ENCODE measurements at regions of chr3 and their contacts with region 1.

Region 1: GRCh38 chr3:63961891-63962290 is 49.7 kb upstream of the SCAANT1 start:
- DNase-seq: peak in 1 of 2 donors; percentile 6
- ATAC-seq: peak; percentile 70 to 76
- H3K4me3 ChIP-seq: no peak overlapping the region
- H3K27ac ChIP-seq: peak overlapping the region; percentile 21 to 79 (median 57)
- H3K4me1 ChIP-seq: peaks cover 31 to 54% of the 10 kb centered on the region in 2 donors
- H3K27me3 ChIP-seq: no peaks in the 10 kb centered on the region
- CTCF ChIP-seq: peak; percentile 64 to 81 (median 66)
- POLR2A ChIP-seq: no peak

Region 2: DNA sequence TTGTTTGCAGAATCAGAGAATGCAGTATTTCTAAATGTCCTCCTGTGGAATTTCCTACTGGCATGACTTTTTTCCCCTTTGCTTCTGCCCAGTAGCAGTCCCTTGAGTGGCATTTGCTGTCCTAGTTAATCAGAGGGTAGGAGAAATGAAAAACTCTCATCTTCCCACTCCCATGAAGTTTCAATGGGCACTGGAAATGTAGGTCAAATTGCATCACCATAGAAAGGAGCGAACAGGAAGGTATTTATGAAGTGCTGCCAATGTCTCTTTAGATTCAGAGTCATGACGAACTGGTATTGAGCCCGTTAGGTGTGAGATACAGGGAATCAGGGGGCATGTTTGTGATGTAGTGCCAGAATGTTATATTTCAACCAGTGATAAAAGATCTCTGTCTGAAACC is 75.0 kb before region 1 on chr3:
- in situ Hi-C with region 1: no loop called
- intact Hi-C with region 1: no loop called
- DNase-seq: no peak
- ATAC-seq: peak; percentile 95 to 97
- H3K4me3 ChIP-seq: peak overlapping the region in 1 of 4 donors; percentile 18
- H3K27ac ChIP-seq: peak overlapping the region in 3 of 4 donors; percentile 42 to 65 (median 60)
- H3K4me1 ChIP-seq: peaks cover 45 to 48% of the 10 kb centered on the region in 2 donors
- H3K27me3 ChIP-seq: no peaks in the 10 kb centered on the region
- CTCF ChIP-seq: no peak
- POLR2A ChIP-seq: no peak

Region 3: DNA sequence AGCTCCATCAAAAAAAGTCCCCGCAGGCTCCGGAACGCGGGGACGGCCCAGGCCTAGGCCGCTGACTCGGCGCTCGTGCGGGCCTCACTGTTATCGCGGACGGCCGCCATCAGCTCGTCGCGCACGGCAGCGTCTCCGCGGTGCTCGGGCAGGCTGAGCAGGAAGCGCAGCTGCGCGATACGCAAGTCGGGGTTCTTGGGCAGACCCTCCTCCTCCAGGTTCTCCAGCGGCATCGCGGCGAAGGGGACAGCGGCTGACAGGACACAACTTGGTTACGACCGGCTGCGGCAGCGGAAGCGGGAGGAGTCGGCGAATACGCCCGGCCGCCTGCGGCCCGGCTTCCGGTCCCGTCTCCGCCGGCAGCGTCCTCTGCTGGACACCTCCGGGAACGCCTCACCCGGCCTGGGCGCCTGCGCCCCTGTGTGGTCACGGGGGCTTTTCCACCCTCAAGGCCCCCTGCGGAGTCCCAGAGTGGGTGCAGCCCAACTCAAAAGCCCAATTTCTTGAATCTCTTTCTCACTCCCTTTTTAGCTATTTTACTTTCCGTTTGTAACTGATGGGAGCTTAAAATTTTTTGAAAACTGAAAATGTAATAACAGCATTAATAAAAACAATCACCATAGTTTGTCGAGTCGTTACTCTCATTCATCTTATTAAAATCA is 61.4 kb after region 1 on chr3 and contains the start of gene PSMD6:
- in situ Hi-C with region 1: no loop called
- intact Hi-C with region 1: loop called (anchors 2 kb)
- DNase-seq: peak; percentile 78 to 81
- ATAC-seq: peak; percentile 91 to 93
- H3K4me3 ChIP-seq: peak within 1 kb of the TSS; percentile 83 to 98 (median 88)
- H3K27ac ChIP-seq: peak within 1 kb of the TSS; percentile 83 to 91 (median 88)
- H3K4me1 ChIP-seq: peaks cover 19% of the 10 kb centered on the region in 2 donors
- H3K27me3 ChIP-seq: no peaks in the 10 kb centered on the region
- CTCF ChIP-seq: peak; percentile 94 to 100 (median 98)
- POLR2A ChIP-seq: peak; percentile 28 to 63
- total RNA-seq, gene PSMD6: 150 to 220 (median 180) TPM

Region 4: GRCh38 chr3:64300790-64301423 is 339.0 kb after region 1 on chr3:
- in situ Hi-C with region 1: no loop called
- intact Hi-C with region 1: no loop called
- DNase-seq: no peak
- ATAC-seq: peak in 1 of 2 donors; percentile 50
- H3K4me3 ChIP-seq: no peak overlapping the region
- H3K27ac ChIP-seq: no peak overlapping the region
- H3K4me1 ChIP-seq: no peaks in the 10 kb centered on the region
- H3K27me3 ChIP-seq: no peaks in the 10 kb centered on the region
- CTCF ChIP-seq: no peak
- POLR2A ChIP-seq: no peak

Measured in gastrocnemius medialis (tissue), 4 donors.